Activated naive CD4-positive, alpha-beta T cell treated with anti-CD3 and anti-CD28 coated beads for 36 hours (primary cell): ENCODE measurements at regions of chr2 and their contacts with region 1.

Region 1: DNA sequence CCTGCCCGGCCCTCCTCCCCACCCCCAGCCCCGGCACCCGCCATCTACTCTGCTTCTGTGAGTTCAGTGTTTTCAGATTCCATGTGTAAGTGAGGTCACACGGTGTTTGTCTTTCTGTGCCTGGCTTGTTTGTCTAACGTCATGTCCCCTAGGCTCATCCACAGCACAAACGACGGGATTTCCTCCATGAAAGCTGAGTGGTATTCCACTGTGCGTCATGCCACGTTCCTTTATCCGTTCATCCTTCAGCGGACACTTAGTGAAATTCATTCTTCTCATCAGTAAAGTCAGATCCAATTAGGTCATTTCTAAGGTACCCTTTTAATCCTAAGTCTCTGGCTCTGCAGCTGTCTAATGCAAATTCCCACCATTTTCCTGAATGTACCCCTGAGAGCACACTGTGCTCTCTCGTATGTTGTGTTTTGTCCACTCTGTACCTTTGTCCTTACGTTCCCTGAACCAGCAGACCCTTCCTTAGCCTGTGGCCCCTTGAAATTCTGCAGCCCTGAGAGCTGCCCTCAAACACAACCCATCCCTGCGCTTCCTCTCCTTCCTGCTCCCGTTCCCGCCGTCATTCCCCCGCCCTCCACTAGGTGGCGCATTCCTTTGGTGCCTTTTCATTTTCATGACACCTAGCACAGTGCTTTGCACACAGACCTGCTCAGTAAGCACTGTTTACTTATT is 44.1 kb downstream of the TRAPPC12 start:
- DNase-seq: peak; percentile 86
- H3K4me3 Mint-ChIP-seq: no peak overlapping the region
- H3K27ac Mint-ChIP-seq: no peak overlapping the region
- H3K4me1 Mint-ChIP-seq: no peaks in the 10 kb centered on the region
- H3K27me3 Mint-ChIP-seq: no peaks in the 10 kb centered on the region

Region 2: GRCh38 chr2:3102081-3102914 is 321.3 kb before region 1 on chr2:
- CTCF ChIA-PET with region 1: no interaction called
- intact Hi-C with region 1: no loop called
- DNase-seq: no peak
- H3K4me3 Mint-ChIP-seq: no peak overlapping the region
- H3K27ac Mint-ChIP-seq: no peak overlapping the region
- H3K4me1 Mint-ChIP-seq: no peaks in the 10 kb centered on the region
- H3K27me3 Mint-ChIP-seq: peaks cover 7% of the 10 kb centered on the region

Region 3: GRCh38 chr2:3334392-3335345 is 89.0 kb before region 1 on chr2:
- CTCF ChIA-PET with region 1: no interaction called
- intact Hi-C with region 1: no loop called
- DNase-seq: no peak
- H3K4me3 Mint-ChIP-seq: no peak overlapping the region
- H3K27ac Mint-ChIP-seq: no peak overlapping the region
- H3K4me1 Mint-ChIP-seq: no peaks in the 10 kb centered on the region
- H3K27me3 Mint-ChIP-seq: no peaks in the 10 kb centered on the region

Region 4: GRCh38 chr2:3361518-3362389 is 61.9 kb before region 1 on chr2:
- CTCF ChIA-PET with region 1: no interaction called
- intact Hi-C with region 1: no loop called
- DNase-seq: no peak
- H3K4me3 Mint-ChIP-seq: no peak overlapping the region
- H3K27ac Mint-ChIP-seq: no peak overlapping the region
- H3K4me1 Mint-ChIP-seq: peaks cover 38% of the 10 kb centered on the region
- H3K27me3 Mint-ChIP-seq: no peaks in the 10 kb centered on the region

Region 5: DNA sequence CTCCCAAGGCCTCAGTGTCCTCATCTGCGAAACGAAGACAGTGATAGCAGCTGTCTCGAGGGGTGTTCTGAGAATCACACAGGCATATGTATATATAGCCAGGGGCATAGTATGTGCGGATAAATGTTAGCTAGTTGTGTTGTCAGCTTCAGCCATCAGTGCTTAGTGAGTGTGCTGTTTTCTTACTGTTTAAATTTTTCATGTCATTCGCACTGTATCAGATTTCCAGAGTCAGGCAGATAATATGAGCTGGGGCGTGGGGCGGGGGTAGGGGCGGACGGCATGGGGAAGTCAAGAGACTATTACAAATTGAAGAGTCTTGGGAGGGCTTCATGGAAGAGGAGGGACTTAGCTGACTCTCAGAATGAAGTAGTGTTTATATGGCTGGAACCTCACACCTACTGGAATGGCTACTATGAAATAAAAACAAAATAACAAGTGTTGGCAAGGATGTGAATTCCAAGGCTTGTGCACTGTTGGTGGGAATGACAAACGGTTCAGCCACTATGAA is 37.1 kb before region 1 on chr2:
- CTCF ChIA-PET with region 1: interaction called, 16 read pairs
- intact Hi-C with region 1: no loop called
- DNase-seq: no peak
- H3K4me3 Mint-ChIP-seq: no peak overlapping the region
- H3K27ac Mint-ChIP-seq: no peak overlapping the region
- H3K4me1 Mint-ChIP-seq: peaks cover 30% of the 10 kb centered on the region
- H3K27me3 Mint-ChIP-seq: no peaks in the 10 kb centered on the region

Region 6: GRCh38 chr2:3405876-3406275 is 17.8 kb before region 1 on chr2:
- CTCF ChIA-PET with region 1: interaction called, 21 read pairs
- intact Hi-C with region 1: no loop called
- DNase-seq: no peak
- H3K4me3 Mint-ChIP-seq: no peak overlapping the region
- H3K27ac Mint-ChIP-seq: no peak overlapping the region
- H3K4me1 Mint-ChIP-seq: peaks cover 13% of the 10 kb centered on the region
- H3K27me3 Mint-ChIP-seq: no peaks in the 10 kb centered on the region

Region 7: DNA sequence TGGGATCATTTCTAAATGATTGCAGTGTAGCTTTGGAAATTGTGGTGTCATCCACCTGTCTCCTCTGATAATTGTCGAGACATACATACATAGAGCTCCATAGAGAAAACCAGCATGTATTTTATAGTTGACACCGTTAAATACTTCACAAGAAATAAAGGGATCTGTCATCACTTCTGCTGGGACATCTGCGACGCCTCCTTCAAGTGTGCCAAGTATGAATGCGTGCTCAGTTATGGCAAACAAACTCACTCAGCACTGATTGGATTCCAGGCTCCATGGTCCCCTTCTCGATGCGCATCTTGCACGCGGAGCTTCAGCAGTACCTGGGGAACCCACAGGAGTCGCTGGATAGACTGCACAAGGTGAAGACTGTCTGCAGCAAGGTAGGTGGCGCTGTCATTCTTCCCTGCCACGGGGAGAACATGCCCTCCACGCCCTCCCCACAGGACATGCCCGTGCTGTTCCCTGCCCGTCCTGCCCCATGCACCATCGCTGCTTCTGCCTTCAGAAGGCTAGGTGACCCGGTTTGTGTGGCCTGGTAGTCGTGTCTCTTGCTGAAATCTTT is 20.0 kb after region 1 on chr2:
- CTCF ChIA-PET with region 1: interaction called, 42 read pairs
- intact Hi-C with region 1: no loop called
- DNase-seq: no peak
- H3K4me3 Mint-ChIP-seq: no peak overlapping the region
- H3K27ac Mint-ChIP-seq: no peak overlapping the region
- H3K4me1 Mint-ChIP-seq: peaks cover 14% of the 10 kb centered on the region
- H3K27me3 Mint-ChIP-seq: no peaks in the 10 kb centered on the region

Region 8: GRCh38 chr2:3539836-3540235 is 116.2 kb after region 1 on chr2:
- CTCF ChIA-PET with region 1: no interaction called
- intact Hi-C with region 1: no loop called
- DNase-seq: no peak
- H3K4me3 Mint-ChIP-seq: no peak overlapping the region
- H3K27ac Mint-ChIP-seq: no peak overlapping the region
- H3K4me1 Mint-ChIP-seq: peaks cover 7% of the 10 kb centered on the region
- H3K27me3 Mint-ChIP-seq: no peaks in the 10 kb centered on the region